Right lobe of liver (tissue), 6 donors: ENCODE measurements at regions of chr15 and their contacts with region 1.

Region 1: GRCh38 chr15:90320061-90320884 is 31.8 kb upstream of the ZNF774 start:
- DNase-seq: peak; percentile 77 to 81 (median 78)
- ATAC-seq: peak; percentile 95 to 98 (median 96)
- H3K4me3 ChIP-seq: no peak overlapping the region
- H3K27ac ChIP-seq: no peak overlapping the region
- H3K4me1 ChIP-seq: peaks cover 0 to 15% (median 0%) of the 10 kb centered on the region in 4 donors
- H3K27me3 ChIP-seq: no peaks in the 10 kb centered on the region
- CTCF ChIP-seq: peak; percentile 96 to 98 (median 98)
- POLR2A ChIP-seq: no peak

Region 2: GRCh38 chr15:90592131-90592881 is 272.0 kb after region 1 on chr15:
- intact Hi-C with region 1: no loop called
- DNase-seq: no peak
- ATAC-seq: peak; percentile 36 to 60 (median 52)
- H3K4me3 ChIP-seq: no peak overlapping the region
- H3K27ac ChIP-seq: peak overlapping the region; percentile 43 to 62 (median 50)
- H3K4me1 ChIP-seq: peaks cover 0 to 50% (median 24%) of the 10 kb centered on the region in 4 donors
- H3K27me3 ChIP-seq: no peaks in the 10 kb centered on the region
- CTCF ChIP-seq: no peak
- POLR2A ChIP-seq: no peak

Region 3: DNA sequence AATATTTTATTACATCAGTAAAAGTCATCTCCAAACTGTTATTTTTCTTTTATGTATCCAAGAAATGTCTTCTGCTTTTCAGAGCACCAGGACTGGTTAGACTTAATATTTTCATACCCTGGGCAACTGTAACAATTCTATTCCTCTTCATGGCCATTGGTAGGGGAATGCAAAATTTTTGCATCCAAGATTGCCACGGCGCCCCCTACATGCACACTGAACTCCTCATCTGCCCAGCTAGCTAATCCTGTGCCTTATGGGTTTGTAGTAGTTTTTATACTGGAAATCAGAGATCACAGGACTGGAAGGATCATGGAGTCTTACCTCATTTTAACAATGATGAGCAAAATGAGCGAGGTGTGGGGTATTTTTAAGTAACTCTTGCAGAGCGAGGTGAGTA is 283.6 kb after region 1 on chr15:
- intact Hi-C with region 1: loop called in 1 of 2 experiments (anchors 10 kb)
- DNase-seq: no peak
- ATAC-seq: peak; percentile 58 to 66 (median 62)
- H3K4me3 ChIP-seq: no peak overlapping the region
- H3K27ac ChIP-seq: no peak overlapping the region
- H3K4me1 ChIP-seq: no peaks in the 10 kb centered on the region
- H3K27me3 ChIP-seq: no peaks in the 10 kb centered on the region
- CTCF ChIP-seq: peak; percentile 42 to 58 (median 49)
- POLR2A ChIP-seq: no peak

Region 4: GRCh38 chr15:90789462-90789861 is 469.2 kb after region 1 on chr15:
- intact Hi-C with region 1: no loop called
- DNase-seq: no peak
- ATAC-seq: no peak
- H3K4me3 ChIP-seq: no peak overlapping the region
- H3K27ac ChIP-seq: no peak overlapping the region
- H3K4me1 ChIP-seq: peaks cover 0 to 14% (median 2%) of the 10 kb centered on the region in 4 donors
- H3K27me3 ChIP-seq: no peaks in the 10 kb centered on the region
- CTCF ChIP-seq: no peak
- POLR2A ChIP-seq: no peak